ENCODE measurements at regions of chr15 and their contacts with region 1.

Region 1: DNA sequence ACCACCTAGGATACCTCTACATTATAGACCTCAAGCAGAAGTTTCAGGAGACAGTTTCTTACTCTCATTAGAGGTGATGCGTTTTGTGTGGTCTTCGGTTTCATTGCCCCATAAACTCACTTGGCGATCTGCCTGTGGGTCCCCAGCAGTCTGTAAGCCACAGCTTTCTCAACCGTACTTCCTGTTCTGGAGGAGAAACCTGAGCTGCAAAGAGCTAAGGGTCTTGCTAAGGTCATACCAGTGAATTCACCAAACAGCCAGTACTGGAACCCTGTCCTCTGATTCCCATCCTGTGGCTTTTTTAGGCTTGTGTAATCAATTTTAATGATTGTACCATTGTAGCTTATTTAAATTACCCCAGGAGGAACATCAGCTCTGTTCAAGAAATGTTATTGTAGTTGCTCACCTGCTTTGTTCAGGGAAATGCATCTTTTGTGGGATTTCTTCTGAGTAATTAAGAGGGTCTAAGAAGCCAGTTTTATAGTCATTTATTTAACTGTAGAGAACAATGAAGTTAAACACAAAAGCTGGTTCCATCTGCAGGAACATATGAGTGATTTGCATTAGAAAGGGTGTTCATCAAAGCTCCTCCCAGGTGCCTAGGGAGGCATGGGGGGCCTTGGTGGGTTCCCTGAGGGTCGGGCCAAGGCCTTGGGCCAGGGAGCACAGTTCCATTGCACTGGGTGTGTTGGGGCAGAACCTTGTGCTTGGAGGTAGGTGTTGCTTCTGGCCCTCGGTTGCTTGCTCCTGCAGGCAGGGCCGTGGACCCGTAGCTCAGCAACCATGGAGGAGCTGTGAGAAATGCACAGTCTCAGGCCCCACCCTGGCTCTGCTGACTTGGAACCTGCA is 69.6 kb downstream of the APBA2 start:
- DNase-seq: peak; percentile 69
- ATAC-seq: peak; percentile 72
- H3K4me3 Mint-ChIP-seq: no peak overlapping the region
- H3K27ac Mint-ChIP-seq: peak overlapping the region; percentile 69
- H3K4me1 Mint-ChIP-seq: peaks cover 35% of the 10 kb centered on the region
- H3K27me3 Mint-ChIP-seq: peaks cover 22% of the 10 kb centered on the region

Region 2: DNA sequence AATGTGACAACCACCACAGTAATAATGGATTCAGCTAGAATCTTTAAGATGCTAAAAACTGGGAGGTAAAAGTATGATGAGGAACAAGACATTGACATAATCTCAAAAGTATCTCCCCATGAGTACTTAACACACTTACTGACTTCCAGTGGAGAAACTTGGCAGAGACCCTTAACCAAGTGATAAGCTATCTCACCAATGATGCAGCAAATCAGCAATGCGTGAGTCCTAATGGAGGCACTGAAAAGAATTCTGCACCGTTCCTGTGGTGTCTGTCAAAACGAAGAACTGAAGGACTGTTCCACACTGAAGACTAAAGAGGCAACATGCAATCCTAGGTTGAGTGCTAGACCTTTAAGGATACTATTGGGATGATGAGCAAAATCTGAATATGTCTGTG is 788.3 kb before region 1 on chr15:
- CTCF ChIA-PET with region 1: no interaction called
- DNase-seq: no peak
- ATAC-seq: no peak
- H3K4me3 Mint-ChIP-seq: no peak overlapping the region
- H3K27ac Mint-ChIP-seq: no peak overlapping the region
- H3K4me1 Mint-ChIP-seq: no peaks in the 10 kb centered on the region
- H3K27me3 Mint-ChIP-seq: no peaks in the 10 kb centered on the region

Region 3: DNA sequence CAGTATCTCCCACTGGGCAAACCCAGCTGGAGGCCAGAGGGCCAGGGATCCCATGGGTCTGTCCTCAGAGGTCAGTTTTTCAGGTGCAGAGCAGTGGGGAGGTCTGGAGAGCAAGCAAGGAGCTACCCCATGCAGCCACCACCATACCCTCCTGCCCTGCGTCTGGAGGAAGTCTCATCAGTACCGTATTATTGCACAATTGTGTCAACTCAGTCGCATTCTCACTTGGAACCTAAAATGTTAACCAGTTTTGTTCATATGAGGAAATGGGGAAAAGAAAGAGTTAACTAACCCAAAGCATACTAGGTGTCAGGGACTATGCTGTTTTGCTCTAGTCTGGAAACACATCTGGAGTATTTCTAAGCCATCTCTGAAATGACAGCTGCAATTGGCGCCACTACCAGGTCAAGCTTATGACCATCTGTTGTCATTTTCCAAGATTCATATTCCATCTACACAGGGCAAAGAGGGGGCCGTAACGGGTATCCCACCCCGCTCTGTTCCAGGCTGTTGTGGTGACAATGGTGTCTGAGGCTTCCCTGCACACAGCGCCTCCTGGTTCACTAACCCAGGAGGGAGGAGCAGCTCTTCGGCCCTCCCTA is 86.5 kb before region 1 on chr15:
- CTCF ChIA-PET with region 1: no interaction called
- DNase-seq: no peak
- ATAC-seq: no peak
- H3K4me3 Mint-ChIP-seq: no peak overlapping the region
- H3K27ac Mint-ChIP-seq: no peak overlapping the region
- H3K4me1 Mint-ChIP-seq: no peaks in the 10 kb centered on the region
- H3K27me3 Mint-ChIP-seq: no peaks in the 10 kb centered on the region

Region 4: GRCh38 chr15:28942046-28942445 is 13.3 kb before region 1 on chr15:
- CTCF ChIA-PET with region 1: interaction called, 12 read pairs
- DNase-seq: peak; percentile 72
- ATAC-seq: peak; percentile 77
- H3K4me3 Mint-ChIP-seq: no peak overlapping the region
- H3K27ac Mint-ChIP-seq: peak overlapping the region; percentile 55
- H3K4me1 Mint-ChIP-seq: peaks cover 53% of the 10 kb centered on the region
- H3K27me3 Mint-ChIP-seq: peaks cover 7% of the 10 kb centered on the region

Region 5: DNA sequence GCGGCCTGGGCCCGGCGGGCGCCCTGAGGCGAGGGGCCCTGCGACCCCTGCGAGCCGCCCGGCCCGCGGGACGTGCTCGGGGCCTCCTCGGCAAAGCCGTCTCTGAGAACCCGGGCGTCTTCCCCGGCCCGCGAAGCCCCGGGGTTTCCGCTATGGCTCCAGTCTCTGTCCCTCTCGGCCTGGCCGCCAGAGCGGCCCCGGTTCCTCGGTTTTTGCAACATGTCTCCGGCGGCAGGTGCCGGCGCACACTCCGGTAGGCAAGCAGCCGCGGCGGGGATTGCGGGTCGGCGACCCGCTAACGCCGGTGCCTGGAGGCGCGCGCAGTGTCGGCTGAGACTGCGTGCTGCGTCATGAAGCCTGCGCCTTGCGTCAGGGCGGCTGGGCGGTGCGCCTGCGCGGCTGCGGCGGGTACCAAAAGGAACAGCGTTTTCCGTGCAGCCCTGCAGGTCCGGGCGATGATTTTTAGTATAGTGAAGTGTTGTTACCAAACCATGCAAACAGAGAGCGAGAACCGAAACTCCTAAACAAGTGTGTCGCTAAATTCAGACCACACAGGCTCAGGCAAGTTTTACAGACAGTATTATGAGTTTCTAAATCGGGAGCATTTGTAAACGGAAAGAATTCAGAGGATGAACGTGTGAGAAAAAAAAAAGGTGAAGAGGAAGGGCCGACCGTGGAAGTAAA is 314.2 kb after region 1 on chr15 and contains the start of gene NSMCE3:
- CTCF ChIA-PET with region 1: no interaction called
- DNase-seq: peak; percentile 94
- ATAC-seq: peak; percentile 94
- H3K4me3 Mint-ChIP-seq: peak within 1 kb of the TSS; percentile 96
- H3K27ac Mint-ChIP-seq: peak within 1 kb of the TSS; percentile 100
- H3K4me1 Mint-ChIP-seq: peaks cover 46% of the 10 kb centered on the region
- H3K27me3 Mint-ChIP-seq: peaks cover 4% of the 10 kb centered on the region
- total RNA-seq, gene NSMCE3: 8.7 to 9.2 TPM

Measured in activated CD8-positive, alpha-beta memory T cell treated with anti-CD3 and anti-CD28 coated beads, Interleukin-2, amount 10 ng/mL, durations not matched to agents 7 days and 5 days (primary cell).